Endothelial cell of umbilical vein (primary cell): ENCODE measurements at regions of chr16 and their contacts with region 1.

Region 1: GRCh38 chr16:28617874-28618273 is 8.0 kb upstream of the SULT1A1 start:
- DNase-seq: no peak
- H3K4me3 ChIP-seq: no peak overlapping the region
- H3K27ac ChIP-seq: no peak overlapping the region
- H3K4me1 ChIP-seq: no peaks in the 10 kb centered on the region
- H3K27me3 ChIP-seq: peaks cover 0 to 1% of the 10 kb centered on the region in 2 experiments
- CTCF ChIP-seq: no peak
- POLR2A ChIP-seq: no peak

Region 2: DNA sequence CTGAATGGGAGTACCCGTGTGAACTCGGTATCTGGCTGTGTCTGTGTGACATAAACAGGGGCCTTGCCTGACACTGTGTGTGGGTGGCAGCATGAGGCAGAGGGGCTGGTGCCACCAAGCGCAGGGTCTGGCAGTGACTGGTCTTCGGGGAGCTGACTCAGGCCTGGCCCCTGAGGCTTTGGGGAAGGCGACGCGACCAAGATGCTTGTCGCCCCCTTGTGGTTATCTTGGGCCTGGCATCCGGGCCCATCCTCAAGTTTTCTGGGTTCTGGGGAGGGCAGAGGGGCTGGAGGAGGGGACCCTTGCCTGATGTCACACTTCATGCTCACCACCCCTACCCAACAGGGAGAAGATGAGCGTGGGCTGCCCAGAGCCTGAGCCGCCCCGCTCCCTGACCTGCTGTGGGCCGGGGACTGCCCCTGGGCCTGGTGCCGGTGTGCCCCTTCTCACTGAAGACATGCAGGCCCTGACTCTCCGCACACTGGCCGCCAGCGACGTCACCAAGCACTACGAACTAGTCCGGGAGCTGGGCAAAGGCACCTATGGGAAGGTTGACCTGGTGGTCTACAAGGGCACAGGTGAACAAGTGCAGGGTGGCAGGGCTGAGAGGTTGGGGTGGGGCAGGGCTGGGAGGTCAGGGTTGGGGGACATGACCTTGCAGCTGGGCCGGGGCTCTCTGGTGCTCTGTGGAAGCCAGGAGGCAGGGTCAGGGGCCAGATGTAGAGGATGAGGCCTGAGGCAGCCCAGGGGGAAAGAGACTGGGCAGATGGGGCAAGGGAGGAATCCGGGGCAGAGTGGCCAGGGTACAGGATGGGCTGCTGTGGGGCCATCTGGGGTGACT is 300.6 kb before region 1 on chr16:
- CTCF ChIA-PET with region 1: no interaction called
- POLR2A ChIA-PET with region 1: no interaction called
- dilution Hi-C with region 1: no loop called
- intact Hi-C with region 1: loop called (anchors 5 kb)
- DNase-seq: peak; percentile 44
- H3K4me3 ChIP-seq: no peak overlapping the region
- H3K27ac ChIP-seq: no peak overlapping the region
- H3K4me1 ChIP-seq: no peaks in the 10 kb centered on the region
- H3K27me3 ChIP-seq: no peaks in the 10 kb centered on the region
- CTCF ChIP-seq: peak; percentile 81 to 92
- POLR2A ChIP-seq: no peak

Region 3: GRCh38 chr16:28481986-28482385 is 135.9 kb before region 1 on chr16:
- CTCF ChIA-PET with region 1: no interaction called
- POLR2A ChIA-PET with region 1: no interaction called
- dilution Hi-C with region 1: no loop called
- intact Hi-C with region 1: no loop called
- DNase-seq: no peak
- H3K4me3 ChIP-seq: no peak overlapping the region
- H3K27ac ChIP-seq: no peak overlapping the region
- H3K4me1 ChIP-seq: no peaks in the 10 kb centered on the region
- H3K27me3 ChIP-seq: no peaks in the 10 kb centered on the region
- CTCF ChIP-seq: no peak
- POLR2A ChIP-seq: no peak

Region 4: DNA sequence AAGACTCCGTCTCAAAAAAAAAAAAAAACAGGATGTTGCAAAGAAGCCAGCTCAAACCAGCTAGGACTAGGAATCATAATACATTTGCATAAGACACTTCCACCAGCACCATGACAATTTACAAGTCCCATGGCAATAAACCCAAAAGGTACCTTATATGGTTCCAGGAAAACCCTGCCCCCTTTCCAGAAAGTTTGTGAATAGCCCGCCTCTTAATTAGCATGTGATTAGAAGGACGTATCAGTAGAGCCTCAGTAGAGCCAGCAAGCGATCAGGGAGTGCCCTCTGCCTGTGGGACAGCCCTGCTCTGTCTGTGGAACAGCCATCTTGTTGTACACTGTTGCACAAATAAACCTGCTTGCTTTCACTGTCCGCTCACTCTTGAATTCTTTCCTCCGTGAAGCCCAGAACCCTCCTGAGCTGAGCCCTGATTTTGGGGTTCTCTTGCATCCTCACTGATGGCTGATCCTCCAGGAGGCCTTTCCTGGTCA is 93.1 kb before region 1 on chr16:
- CTCF ChIA-PET with region 1: no interaction called
- POLR2A ChIA-PET with region 1: no interaction called
- dilution Hi-C with region 1: no loop called
- intact Hi-C with region 1: loop called (anchors 5 kb)
- DNase-seq: no peak
- H3K4me3 ChIP-seq: no peak overlapping the region
- H3K27ac ChIP-seq: no peak overlapping the region
- H3K4me1 ChIP-seq: peaks cover 2% of the 10 kb centered on the region
- H3K27me3 ChIP-seq: peaks cover 0 to 2% of the 10 kb centered on the region in 2 experiments
- CTCF ChIP-seq: no peak
- POLR2A ChIP-seq: no peak

Region 5: GRCh38 chr16:28902909-28903308 is 285.0 kb after region 1 on chr16:
- CTCF ChIA-PET with region 1: no interaction called
- POLR2A ChIA-PET with region 1: no interaction called
- dilution Hi-C with region 1: no loop called
- intact Hi-C with region 1: no loop called
- DNase-seq: no peak
- H3K4me3 ChIP-seq: no peak overlapping the region
- H3K27ac ChIP-seq: no peak overlapping the region
- H3K4me1 ChIP-seq: no peaks in the 10 kb centered on the region
- H3K27me3 ChIP-seq: no peaks in the 10 kb centered on the region
- CTCF ChIP-seq: no peak
- POLR2A ChIP-seq: no peak